ENCODE measurements at regions of chr15 and their contacts with region 1.

Region 1: DNA sequence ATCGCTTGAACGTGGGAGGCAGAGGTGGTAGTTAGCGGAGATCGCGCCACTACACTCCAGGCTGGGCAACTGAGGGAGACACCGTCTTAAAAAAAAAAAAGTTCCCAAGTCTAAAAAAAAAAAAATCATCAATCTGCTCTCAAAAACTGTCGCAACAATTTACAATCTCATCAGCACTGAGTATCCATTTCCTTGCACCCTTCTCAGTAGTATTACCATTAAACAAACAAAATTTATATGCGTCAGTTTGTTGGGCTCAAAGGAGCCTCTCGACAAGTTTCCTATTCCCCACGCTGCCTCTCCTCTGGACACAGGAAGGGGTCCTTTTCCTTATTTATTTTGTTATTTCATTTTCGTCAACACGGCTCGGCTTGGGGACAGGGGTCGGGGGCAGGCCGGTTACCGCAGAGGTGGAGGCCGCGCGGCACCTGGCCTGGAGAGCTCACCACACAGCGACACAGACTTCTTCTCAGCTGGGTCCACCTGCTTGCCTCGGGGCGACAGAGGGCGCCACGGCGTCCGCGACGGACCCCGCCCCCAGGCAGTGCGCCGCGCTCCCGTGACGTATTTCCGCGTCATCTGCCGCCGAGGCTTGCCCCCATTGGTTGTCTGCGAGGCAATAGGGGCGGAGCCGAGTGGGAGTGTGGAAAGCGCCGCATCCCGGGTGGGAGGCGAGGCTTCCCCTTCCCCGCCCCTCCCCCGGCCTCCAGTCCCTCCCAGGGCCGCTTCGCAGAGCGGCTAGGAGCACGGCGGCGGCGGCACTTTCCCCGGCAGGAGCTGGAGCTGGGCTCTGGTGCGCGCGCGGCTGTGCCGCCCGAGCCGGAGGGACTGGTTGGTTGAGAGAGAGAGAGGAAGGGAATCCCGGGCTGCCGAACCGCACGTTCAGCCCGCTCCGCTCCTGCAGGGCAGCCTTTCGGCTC is at the start of gene MAP2K1:
- DNase-seq: peak; percentile 95 to 99 (median 96)
- H3K4me3 ChIP-seq: peak within 1 kb of the TSS; percentile 61 to 99 (median 89)
- H3K27ac ChIP-seq: peak within 1 kb of the TSS in 58 of 59 donors; percentile 44 to 95 (median 87)
- H3K27me3 ChIP-seq: no peaks in the 10 kb centered on the region
- CTCF ChIP-seq: peak; percentile 78 to 98 (median 94)
- total RNA-seq, gene MAP2K1: 67.2 to 209 (median 137) TPM

Region 2: GRCh38 chr15:66497502-66498455 is 111.3 kb after region 1 on chr15 and contains the start of gene SNAPC5:
- intact Hi-C with region 1: loop called (anchors 1 kb)
- DNase-seq: peak; percentile 94 to 97 (median 96)
- H3K4me3 ChIP-seq: peak within 1 kb of the TSS; percentile 47 to 99 (median 93)
- H3K27ac ChIP-seq: peak within 1 kb of the TSS in 58 of 59 donors; percentile 38 to 96 (median 84)
- H3K27me3 ChIP-seq: no peaks in the 10 kb centered on the region
- CTCF ChIP-seq: peak; percentile 98 to 100 (median 99)
- total RNA-seq, gene SNAPC5: 18.3 to 49.0 (median 32.9) TPM

Region 3: DNA sequence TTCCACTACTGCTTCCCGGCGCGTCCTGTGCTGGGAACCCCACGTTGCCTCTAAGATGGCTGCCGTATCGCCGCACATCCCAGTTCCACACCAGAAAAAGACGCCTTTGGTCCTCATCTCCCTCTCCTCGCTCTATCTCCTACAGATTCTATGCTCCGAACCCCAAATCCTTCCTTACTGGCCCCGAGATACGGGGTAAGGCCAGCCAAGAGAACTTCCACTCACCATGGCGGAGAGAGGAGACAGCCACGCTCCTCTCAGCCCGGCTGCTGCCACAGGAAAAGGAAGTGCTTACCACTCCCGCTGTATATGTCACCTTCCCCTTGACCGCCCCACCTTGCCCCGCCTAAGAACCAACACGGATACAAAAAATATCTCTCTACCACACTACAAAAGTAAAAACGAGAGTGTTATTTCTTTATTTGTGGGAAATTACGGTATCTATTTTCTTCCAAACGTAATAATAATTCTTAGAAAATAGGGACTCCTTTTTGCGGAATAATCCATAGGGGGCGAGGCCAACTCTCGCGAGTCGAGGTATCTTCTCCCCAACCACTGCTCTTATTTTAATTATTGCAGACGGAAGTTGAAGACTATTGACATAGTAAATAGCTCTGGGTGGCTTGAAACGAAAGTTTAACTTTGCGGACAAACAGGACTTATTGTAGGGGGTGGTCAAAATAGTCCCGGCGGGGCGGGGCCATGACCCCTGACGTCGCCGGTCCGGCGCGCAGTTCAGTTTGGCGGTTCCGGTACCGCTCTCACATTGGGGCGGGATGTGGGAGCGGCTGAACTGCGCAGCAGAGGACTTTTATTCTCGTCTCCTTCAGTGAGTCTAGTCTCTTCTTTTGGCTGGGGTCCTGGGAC is 118.3 kb after region 1 on chr15 and contains the starts of genes RPL4 and ZWILCH:
- intact Hi-C with region 1: loop called in 1 of 2 experiments (anchors 2 kb)
- DNase-seq: peak; percentile 67 to 83 (median 74)
- H3K4me3 ChIP-seq: peak within 1 kb of the TSS; percentile 62 to 100 (median 92)
- H3K27ac ChIP-seq: peak within 1 kb of the TSS; percentile 6 to 98 (median 95)
- H3K27me3 ChIP-seq: no peaks in the 10 kb centered on the region
- CTCF ChIP-seq: peak in 35 of 56 donors; percentile 4 to 54 (median 27)
- total RNA-seq, gene RPL4: 527 to 1,058 (median 732) TPM
- total RNA-seq, gene ZWILCH: 3.0 to 12.5 (median 6.8) TPM